MCF 10A (cell line): ENCODE measurements at regions of chr1 and their contacts with region 1.

Region 1: GRCh38 chr1:58903514-58904298 is 119.9 kb upstream of the JUN start:
- DNase-seq: peak; percentile 82
- H3K4me3 Mint-ChIP-seq: peak overlapping the region; percentile 72
- H3K27ac Mint-ChIP-seq: peak overlapping the region; percentile 68
- H3K4me1 Mint-ChIP-seq: peaks cover 13% of the 10 kb centered on the region
- H3K27me3 Mint-ChIP-seq: no peaks in the 10 kb centered on the region
- CTCF ChIP-seq: no peak

Region 2: DNA sequence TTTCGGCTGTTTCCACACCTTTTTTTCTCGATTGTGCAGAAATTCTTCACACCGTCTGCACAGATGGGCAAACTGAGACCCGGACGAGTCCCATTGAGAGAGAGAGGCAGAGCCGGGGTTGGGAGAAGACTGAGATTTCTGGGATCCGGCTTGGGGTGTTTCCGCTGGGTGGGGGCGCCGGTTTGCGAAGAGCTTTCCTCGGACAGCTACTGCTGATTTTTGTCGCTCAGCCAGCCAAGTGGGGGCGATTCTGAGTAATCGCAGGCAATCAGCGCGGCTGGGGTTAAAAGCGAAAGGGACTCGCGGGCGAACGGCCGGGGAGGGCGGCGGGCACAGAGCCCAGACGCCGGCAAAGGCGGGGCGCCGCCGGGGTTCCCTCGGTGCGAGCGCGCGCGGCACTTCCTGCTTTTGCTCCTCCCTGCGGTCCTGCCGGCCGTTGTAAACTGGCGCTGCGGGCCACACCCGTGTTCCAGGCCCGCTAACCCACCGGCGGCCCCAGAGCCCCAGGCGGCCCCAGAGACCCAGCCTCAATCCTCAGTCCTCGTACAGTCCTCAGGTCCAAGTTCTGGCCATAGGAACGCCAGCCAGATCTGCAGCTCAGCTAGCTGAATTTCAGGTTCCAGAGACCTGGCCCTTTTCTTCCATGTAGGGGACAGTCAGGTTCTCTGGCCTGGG is 87.5 kb before region 1 on chr1:
- CTCF ChIA-PET with region 1: no interaction called
- POLR2A ChIA-PET with region 1: interaction called, 5 read pairs
- intact Hi-C with region 1: loop called (anchors 1 kb)
- DNase-seq: peak; percentile 88
- H3K4me3 Mint-ChIP-seq: peak overlapping the region; percentile 78
- H3K27ac Mint-ChIP-seq: peak overlapping the region; percentile 91
- H3K4me1 Mint-ChIP-seq: peaks cover 33% of the 10 kb centered on the region
- H3K27me3 Mint-ChIP-seq: no peaks in the 10 kb centered on the region
- CTCF ChIP-seq: no peak

Region 3: DNA sequence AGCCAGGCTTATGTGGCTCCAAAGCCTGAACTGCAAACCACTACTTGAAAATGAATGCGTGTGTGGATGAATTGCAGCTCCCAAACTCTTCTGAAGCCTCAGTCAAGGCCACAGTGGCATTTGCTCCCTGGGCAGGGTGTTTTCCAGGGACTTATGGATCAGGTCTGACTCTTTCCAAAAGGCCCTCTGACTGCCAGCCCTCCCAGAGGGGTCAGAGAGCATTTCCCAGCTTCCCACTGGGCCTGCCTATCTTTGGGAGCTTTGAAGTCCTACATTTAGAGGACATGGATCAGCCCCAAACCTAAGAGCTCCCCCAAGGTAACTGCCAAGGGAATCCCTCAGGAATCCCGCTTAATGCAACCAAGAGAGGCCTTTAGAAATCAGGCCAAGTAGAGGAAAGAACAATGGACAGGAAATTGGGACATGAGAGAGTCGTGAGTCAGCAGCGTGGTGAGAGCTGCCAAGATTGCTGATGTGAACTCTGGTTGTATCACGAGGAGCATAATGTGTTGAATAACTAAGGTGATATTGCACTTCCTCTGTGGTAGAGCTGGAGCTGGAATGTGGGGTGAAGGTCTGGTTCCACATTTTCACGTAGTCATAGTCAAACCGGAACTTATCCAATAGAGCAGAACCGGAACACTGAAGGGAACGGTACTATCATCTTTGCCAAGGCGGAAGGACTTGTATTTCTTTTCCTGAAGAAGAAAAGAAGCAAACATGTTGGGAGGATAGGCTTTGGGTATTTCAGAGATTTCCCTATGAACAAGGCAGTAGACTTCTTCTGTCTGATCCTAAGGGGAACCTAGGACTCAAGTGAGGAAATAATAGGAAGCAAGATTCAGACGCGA is 20.4 kb before region 1 on chr1:
- CTCF ChIA-PET with region 1: no interaction called
- POLR2A ChIA-PET with region 1: interaction called, 10 read pairs
- intact Hi-C with region 1: no loop called
- DNase-seq: peak; percentile 99
- H3K4me3 Mint-ChIP-seq: no peak overlapping the region
- H3K27ac Mint-ChIP-seq: peak overlapping the region; percentile 8
- H3K4me1 Mint-ChIP-seq: peaks cover 44% of the 10 kb centered on the region
- H3K27me3 Mint-ChIP-seq: no peaks in the 10 kb centered on the region
- CTCF ChIP-seq: no peak

Region 4: GRCh38 chr1:58922302-58923089 is 18.8 kb after region 1 on chr1:
- CTCF ChIA-PET with region 1: interaction called, 4 read pairs
- POLR2A ChIA-PET with region 1: interaction called, 12 read pairs
- intact Hi-C with region 1: no loop called
- DNase-seq: peak; percentile 91
- H3K4me3 Mint-ChIP-seq: peak overlapping the region; percentile 7
- H3K27ac Mint-ChIP-seq: peak overlapping the region; percentile 87
- H3K4me1 Mint-ChIP-seq: peaks cover 52% of the 10 kb centered on the region
- H3K27me3 Mint-ChIP-seq: no peaks in the 10 kb centered on the region
- CTCF ChIP-seq: no peak

Region 5: DNA sequence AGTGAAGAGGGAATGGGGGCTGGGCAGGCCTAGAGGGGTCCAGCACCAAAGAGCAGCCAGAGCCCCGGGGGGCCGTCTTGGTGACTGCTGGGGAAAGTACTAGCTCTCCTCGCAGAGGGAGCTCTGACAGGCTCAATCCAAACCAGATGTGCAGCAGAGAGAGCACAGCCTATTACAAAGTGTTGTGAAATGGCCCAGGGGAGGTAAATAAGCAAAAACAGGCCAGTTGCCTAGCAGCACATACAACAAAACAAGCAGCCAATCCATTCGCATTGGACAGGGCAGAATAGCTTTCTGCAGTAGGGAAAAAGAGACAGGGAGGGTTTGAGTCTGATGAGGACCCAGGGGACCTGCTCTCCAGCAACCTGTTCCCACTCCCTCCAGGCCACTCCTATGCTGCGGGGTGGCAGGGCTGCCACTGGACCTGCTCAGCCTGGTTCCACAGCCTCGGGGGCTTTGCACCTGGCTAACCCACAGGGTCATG is 153.5 kb after region 1 on chr1:
- CTCF ChIA-PET with region 1: no interaction called
- POLR2A ChIA-PET with region 1: no interaction called
- intact Hi-C with region 1: loop called (anchors 10 kb)
- DNase-seq: peak; percentile 77
- H3K4me3 Mint-ChIP-seq: no peak overlapping the region
- H3K27ac Mint-ChIP-seq: peak overlapping the region; percentile 50
- H3K4me1 Mint-ChIP-seq: peaks cover 21% of the 10 kb centered on the region
- H3K27me3 Mint-ChIP-seq: no peaks in the 10 kb centered on the region
- CTCF ChIP-seq: no peak